ENCODE measurements at regions of chr3 and their contacts with region 1.

Region 1: GRCh38 chr3:45656575-45657363 is 32.4 kb upstream of the SACM1L start:
- DNase-seq: peak; percentile 93 to 97 (median 96)
- H3K4me3 ChIP-seq: no peak overlapping the region
- H3K27ac ChIP-seq: no peak overlapping the region
- H3K4me1 ChIP-seq: peaks cover 0 to 17% of the 10 kb centered on the region in 2 donors
- H3K27me3 ChIP-seq: no peaks in the 10 kb centered on the region
- CTCF ChIP-seq: peak; percentile 93 to 99 (median 99)
- POLR2A ChIP-seq: no peak

Region 2: GRCh38 chr3:45224824-45225464 is 431.8 kb before region 1 on chr3:
- intact Hi-C with region 1: loop called in 1 of 2 experiments (anchors 10 kb)
- DNase-seq: peak; percentile 78 to 90 (median 83)
- H3K4me3 ChIP-seq: peak overlapping the region in 2 of 4 donors; percentile 32 to 95
- H3K27ac ChIP-seq: peak overlapping the region in 1 of 5 donors; percentile 71
- H3K4me1 ChIP-seq: peaks cover 0 to 10% of the 10 kb centered on the region in 2 donors
- H3K27me3 ChIP-seq: no peaks in the 10 kb centered on the region
- CTCF ChIP-seq: peak in 5 of 6 experiments; percentile 37 to 74 (median 51)
- POLR2A ChIP-seq: no peak

Region 3: DNA sequence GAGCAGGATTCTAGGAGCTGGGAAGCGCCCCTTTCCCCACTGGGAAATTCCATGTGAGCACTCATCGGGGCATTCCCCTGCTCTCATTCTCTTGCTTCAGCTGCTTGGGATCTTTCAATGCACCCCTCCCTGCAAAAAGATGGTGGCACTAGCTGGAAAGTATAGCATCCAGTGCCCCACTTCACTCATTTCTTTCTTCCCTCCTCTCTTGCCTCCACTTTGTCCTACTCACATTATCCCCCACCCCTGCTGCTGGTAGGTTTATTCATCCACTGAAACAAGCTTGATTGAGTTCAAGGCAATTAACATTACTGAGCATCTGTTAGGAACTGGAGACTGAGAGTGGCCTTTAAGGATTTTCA is 147.0 kb before region 1 on chr3:
- intact Hi-C with region 1: loop called (anchors 5 kb)
- DNase-seq: no peak
- H3K4me3 ChIP-seq: no peak overlapping the region
- H3K27ac ChIP-seq: no peak overlapping the region
- H3K4me1 ChIP-seq: no peaks in the 10 kb centered on the region
- H3K27me3 ChIP-seq: no peaks in the 10 kb centered on the region
- CTCF ChIP-seq: no peak
- POLR2A ChIP-seq: no peak

Region 4: DNA sequence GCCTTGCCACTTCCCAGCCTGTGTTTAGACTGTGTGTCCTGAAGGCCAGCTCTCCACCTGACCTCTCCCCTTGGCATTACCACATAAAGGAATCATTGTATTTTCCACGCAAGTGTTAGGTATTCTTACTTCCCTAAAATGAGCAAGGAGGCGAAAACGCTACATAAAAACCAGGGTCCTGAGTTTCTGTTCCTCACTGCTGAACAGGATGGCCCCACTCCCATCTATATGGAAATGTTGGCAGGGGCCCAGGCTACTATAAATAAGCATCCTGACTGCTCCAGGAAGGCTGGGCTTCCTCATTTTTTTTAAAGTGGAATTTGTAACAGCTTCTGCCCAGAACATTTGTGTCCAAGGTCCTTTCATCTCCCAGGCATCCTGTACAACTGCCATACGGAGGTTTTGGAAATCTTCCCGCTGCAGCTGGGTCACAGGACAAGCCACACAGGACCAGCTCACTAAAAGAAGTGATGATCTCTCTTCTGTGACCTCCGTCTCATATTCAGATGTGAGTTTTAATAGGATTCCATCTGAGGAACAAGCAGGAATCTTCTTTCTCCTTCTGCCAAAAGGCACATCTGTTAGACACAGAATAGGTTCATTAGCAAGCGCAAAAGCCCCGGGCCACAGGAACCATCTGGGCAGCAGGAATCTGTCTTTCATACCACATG is 118.7 kb before region 1 on chr3:
- intact Hi-C with region 1: no loop called
- DNase-seq: peak in 6 of 7 donors; percentile 51 to 77 (median 60)
- H3K4me3 ChIP-seq: no peak overlapping the region
- H3K27ac ChIP-seq: peak overlapping the region; percentile 10 to 84 (median 29)
- H3K4me1 ChIP-seq: peaks cover 4 to 15% of the 10 kb centered on the region in 2 donors
- H3K27me3 ChIP-seq: no peaks in the 10 kb centered on the region
- CTCF ChIP-seq: no peak
- POLR2A ChIP-seq: no peak

Measured in adrenal gland (tissue), 19 donors.